SK-N-SH (cell line): ENCODE measurements at regions of chr1 and their contacts with region 1.

Region 1: DNA sequence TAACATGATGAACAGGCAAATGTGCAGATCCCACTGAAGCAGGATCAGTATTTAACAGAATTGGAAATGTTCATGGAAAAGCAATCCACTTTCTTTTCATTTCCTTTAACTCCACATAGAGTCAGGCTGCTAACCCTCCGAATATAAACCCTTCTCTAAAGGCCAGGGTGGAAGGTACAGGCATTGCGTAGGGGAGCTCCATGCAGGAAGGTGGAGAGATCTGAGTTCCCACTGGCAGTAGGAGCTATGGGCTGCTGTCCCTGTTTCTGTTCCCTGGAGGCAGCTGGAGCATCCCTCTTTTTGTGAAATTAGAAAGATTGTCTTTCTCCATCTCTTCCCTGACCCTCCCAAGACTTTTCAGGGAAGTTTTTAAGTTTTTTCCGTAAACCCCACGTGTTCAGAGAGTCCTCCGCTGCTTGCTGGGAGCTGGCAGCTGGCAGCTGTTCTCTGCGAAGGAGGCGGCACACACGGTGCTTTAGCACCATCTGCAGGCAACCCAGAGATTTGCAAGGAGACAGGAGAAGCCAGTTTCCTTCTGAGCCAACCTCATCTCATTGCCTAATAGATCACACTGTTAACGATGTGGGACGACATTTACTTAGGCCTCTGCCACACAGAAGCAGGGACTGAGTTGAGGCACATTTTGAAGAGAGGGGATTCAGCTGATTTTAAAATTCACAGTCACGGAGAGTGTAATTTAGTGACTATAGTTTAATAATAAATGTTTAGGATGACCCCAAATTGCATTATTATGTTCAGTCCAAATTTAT is 55.4 kb upstream of the HOOK1 start:
- DNase-seq: peak; percentile 73
- H3K4me3 ChIP-seq: peak overlapping the region in 1 of 2 experiments; percentile 39; a peak in 2 of 4 replicates
- H3K27ac ChIP-seq: no peak overlapping the region
- H3K4me1 ChIP-seq: peaks cover 7% of the 10 kb centered on the region in 2 experiments
- H3K27me3 ChIP-seq: no peaks in the 10 kb centered on the region
- CTCF ChIP-seq: peak; percentile 93
- EP300 ChIP-seq: no peak
- RAD21 ChIP-seq: peak; percentile 98

Region 2: GRCh38 chr1:58739856-58740466 is 1019.4 kb before region 1 on chr1:
- CTCF ChIA-PET with region 1: interaction called, 55 read pairs
- POLR2A ChIA-PET with region 1: no interaction called
- DNase-seq: peak; percentile 60
- H3K4me3 ChIP-seq: no peak overlapping the region; a peak in 1 of 4 replicates
- H3K27ac ChIP-seq: no peak overlapping the region
- H3K4me1 ChIP-seq: no peaks in the 10 kb centered on the region; a peak in 2 of 4 replicates
- H3K27me3 ChIP-seq: no peaks in the 10 kb centered on the region
- CTCF ChIP-seq: peak; percentile 94
- EP300 ChIP-seq: no peak
- RAD21 ChIP-seq: peak; percentile 94

Region 3: DNA sequence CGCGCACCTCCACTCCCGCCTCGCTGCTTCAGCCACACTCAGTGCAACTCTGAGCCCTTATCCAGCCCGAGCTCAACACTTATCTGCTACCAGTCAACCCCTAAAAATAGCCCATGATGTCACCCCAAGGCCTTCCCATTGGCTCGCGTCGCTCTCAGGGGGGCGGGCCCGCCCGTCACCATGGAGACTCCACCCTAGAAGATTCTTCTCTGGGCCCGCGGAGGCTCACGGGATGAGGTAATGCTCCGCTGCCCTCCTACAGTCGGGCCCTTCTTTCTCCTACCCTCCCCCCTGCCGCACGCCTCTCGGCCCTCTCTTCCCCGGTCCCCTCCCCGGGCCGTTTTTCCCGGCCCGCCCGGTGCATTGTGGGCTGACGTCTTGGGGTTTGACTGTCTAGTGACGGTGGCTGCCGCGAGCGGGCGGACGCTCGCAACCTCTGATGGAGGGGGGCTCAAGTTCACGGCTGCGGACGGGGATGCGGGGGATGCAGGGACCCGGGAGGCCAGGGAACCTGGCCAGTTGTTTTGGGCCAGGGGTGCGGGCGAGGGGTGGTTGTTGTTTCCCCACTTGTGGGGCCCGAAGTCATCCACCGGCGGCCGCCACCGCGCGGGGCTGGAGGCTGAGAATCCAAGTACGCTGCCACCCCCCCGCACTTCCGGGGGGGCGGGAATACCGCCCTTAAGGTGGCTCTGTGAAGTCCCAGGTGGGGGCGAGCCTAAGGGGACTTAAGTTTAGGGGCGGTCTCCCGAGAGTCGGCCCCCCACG is 975.2 kb before region 1 on chr1 and contains the start of gene JUN:
- CTCF ChIA-PET with region 1: interaction called, 13 read pairs
- POLR2A ChIA-PET with region 1: interaction called, 3 read pairs
- DNase-seq: peak; percentile 96
- H3K4me3 ChIP-seq: peak within 1 kb of the TSS; percentile 86 to 89
- H3K27ac ChIP-seq: peak within 1 kb of the TSS; percentile 93 to 98
- H3K4me1 ChIP-seq: peaks cover 5 to 25% of the 10 kb centered on the region in 2 experiments; a peak in 2 of 4 replicates
- H3K27me3 ChIP-seq: no peaks in the 10 kb centered on the region
- CTCF ChIP-seq: no peak
- EP300 ChIP-seq: no peak
- RAD21 ChIP-seq: no peak
- polyA plus RNA-seq, gene JUN: 54.6 and 66.5 TPM in 2 replicates

Region 4: DNA sequence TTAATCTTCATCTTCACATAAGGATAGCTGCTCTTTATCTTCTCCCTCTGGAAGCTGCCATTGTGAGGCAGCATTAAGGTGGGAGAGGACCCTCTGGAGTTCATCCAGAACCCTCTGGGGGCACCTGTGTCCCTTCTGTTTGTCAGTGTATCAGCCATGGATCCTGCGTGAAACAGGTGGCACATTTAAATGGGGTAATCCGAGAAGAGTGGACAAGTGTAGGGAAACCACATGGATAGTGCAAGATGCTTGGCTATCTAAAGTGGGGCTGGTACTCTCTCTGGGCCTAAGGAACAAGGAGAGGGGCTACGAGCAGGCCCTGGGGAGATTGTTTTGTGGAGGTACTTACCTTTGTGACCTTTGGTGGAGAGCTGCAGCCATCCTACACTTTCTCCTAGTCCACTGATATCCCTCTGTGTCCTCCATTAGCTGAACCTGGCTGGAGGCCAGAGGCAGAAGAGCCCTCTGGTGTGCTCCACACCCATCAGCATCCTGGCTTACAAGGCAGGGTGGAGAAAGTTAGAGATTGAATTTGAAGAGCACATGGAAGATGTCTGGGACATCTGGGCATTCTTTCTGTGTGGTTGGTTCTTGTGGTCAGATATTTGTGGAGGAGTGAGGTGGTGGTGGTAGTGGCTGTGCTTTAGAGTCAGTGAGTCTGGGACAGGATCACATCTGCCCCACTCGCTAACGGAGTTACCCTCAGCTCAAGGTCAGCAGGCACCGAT is 344.8 kb before region 1 on chr1:
- CTCF ChIA-PET with region 1: no interaction called
- POLR2A ChIA-PET with region 1: no interaction called
- DNase-seq: no peak
- H3K4me3 ChIP-seq: no peak overlapping the region
- H3K27ac ChIP-seq: no peak overlapping the region
- H3K4me1 ChIP-seq: peaks cover 0 to 4% of the 10 kb centered on the region in 2 experiments; a peak in 1 of 4 replicates
- H3K27me3 ChIP-seq: no peaks in the 10 kb centered on the region
- CTCF ChIP-seq: no peak
- EP300 ChIP-seq: no peak
- RAD21 ChIP-seq: no peak

Region 5: GRCh38 chr1:59707178-59707791 is 52.1 kb before region 1 on chr1:
- CTCF ChIA-PET with region 1: interaction called, 17 read pairs
- POLR2A ChIA-PET with region 1: no interaction called
- DNase-seq: no peak
- H3K4me3 ChIP-seq: no peak overlapping the region
- H3K27ac ChIP-seq: peak overlapping the region; percentile 58 to 87
- H3K4me1 ChIP-seq: peaks cover 2 to 37% of the 10 kb centered on the region in 2 experiments
- H3K27me3 ChIP-seq: no peaks in the 10 kb centered on the region
- CTCF ChIP-seq: no peak
- EP300 ChIP-seq: peak in 1 of 2 experiments; percentile 74; a peak in 2 of 4 replicates
- RAD21 ChIP-seq: no peak

Region 6: DNA sequence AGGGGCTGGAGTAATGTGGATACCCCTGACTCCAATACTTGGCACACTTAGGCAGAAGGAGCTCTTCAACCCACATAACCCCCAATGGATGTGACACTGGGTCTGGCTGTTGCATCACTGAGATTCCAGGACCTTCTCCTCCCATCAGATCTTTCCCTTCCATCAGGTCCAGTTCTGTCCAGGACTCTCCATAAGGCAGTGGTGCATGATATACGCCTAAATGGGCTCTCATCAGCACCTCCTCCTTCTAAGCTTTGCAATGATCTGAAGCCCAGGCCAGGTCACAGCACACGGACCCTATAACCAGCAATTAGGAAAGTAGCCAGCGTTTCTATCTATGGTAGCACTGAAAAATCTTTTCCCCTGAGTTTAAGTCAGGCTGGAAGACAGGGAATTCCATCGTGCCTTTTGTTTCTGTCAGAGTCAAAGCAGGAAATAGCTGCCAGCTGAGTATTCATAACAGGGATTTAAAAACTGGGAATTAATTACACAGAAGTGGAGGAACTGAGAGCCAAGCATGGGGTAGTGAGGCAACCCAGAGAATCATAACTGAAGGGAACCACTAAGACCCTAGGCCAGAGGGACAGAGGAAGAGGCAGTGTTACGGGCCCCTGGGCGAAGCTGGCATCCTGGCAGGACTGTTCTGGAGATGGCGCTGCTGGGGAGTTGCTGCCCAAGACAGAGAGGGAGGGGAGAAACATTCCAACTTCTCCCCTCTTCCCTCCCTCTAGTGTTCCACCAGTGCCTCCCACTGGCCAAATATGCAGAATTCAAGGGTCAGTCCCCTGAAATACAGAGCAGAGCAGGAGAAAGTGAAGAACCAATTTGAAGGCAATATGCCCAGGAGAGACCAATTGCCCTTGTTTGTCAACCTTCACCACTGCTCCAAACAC is 17.9 kb after region 1 on chr1:
- CTCF ChIA-PET with region 1: interaction called, 18 read pairs
- POLR2A ChIA-PET with region 1: no interaction called
- DNase-seq: no peak
- H3K4me3 ChIP-seq: no peak overlapping the region
- H3K27ac ChIP-seq: peak overlapping the region; percentile 4 to 57; a peak in 3 of 4 replicates
- H3K4me1 ChIP-seq: peaks cover 0 to 15% of the 10 kb centered on the region in 2 experiments; a peak in 2 of 4 replicates
- H3K27me3 ChIP-seq: no peaks in the 10 kb centered on the region
- CTCF ChIP-seq: peak; percentile 55
- EP300 ChIP-seq: no peak
- RAD21 ChIP-seq: no peak